ENCODE measurements at regions of chr1 and their contacts with region 1.

Region 1: GRCh38 chr1:92577261-92577895 is 90.7 kb upstream of the GFI1 start:
- DNase-seq: no peak
- H3K4me3 Mint-ChIP-seq: peak overlapping the region; percentile 89
- H3K27ac Mint-ChIP-seq: peak overlapping the region; percentile 75
- H3K4me1 Mint-ChIP-seq: peaks cover 81% of the 10 kb centered on the region
- H3K27me3 Mint-ChIP-seq: no peaks in the 10 kb centered on the region

Region 2: GRCh38 chr1:92563457-92564216 is 13.7 kb before region 1 on chr1:
- intact Hi-C with region 1: loop called (anchors 2 kb)
- DNase-seq: no peak
- H3K4me3 Mint-ChIP-seq: no peak overlapping the region
- H3K27ac Mint-ChIP-seq: peak overlapping the region; percentile 12
- H3K4me1 Mint-ChIP-seq: peaks cover 41% of the 10 kb centered on the region
- H3K27me3 Mint-ChIP-seq: no peaks in the 10 kb centered on the region

Region 3: GRCh38 chr1:92653617-92654381 is 76.4 kb after region 1 on chr1:
- intact Hi-C with region 1: no loop called
- DNase-seq: no peak
- H3K4me3 Mint-ChIP-seq: no peak overlapping the region
- H3K27ac Mint-ChIP-seq: no peak overlapping the region
- H3K4me1 Mint-ChIP-seq: no peaks in the 10 kb centered on the region
- H3K27me3 Mint-ChIP-seq: peaks cover 8% of the 10 kb centered on the region

Region 4: DNA sequence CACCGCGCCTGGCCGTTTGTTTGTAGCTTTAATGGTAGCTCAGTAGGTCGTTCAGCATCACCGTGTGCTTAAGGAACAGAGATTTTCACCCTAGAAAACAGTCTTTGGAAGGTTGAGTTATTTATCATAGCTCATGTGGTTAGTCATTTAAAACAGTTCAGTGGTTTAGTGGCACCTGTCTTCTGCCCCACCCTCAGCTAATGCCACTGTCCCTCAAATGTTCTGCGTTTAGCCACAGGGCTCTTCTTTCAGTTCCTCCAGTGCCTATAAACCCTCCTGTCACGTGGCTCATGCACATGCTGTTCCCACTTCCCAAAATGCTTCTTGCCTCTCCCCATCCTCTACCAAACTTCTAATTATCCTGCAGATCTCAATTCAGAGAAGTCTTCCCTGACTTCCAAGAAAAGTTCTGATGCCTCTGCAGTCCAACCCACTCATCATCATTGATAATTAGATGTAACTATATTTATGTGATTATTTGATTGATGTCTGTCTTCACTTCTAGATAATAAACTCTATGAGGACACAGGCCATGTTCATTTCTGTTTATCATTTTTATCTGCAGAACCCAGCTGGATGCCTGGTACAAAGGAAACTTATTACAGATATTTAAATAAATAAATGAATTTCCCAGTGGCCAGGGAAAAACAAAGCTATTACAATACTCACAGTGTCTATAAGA is 398.3 kb after region 1 on chr1:
- intact Hi-C with region 1: loop called (anchors 5 kb)
- DNase-seq: no peak
- H3K4me3 Mint-ChIP-seq: peak overlapping the region; percentile 3
- H3K27ac Mint-ChIP-seq: peak overlapping the region; percentile 70
- H3K4me1 Mint-ChIP-seq: peaks cover 80% of the 10 kb centered on the region
- H3K27me3 Mint-ChIP-seq: no peaks in the 10 kb centered on the region